ENCODE measurements at regions of chr6 and their contacts with region 1.

Region 1: DNA sequence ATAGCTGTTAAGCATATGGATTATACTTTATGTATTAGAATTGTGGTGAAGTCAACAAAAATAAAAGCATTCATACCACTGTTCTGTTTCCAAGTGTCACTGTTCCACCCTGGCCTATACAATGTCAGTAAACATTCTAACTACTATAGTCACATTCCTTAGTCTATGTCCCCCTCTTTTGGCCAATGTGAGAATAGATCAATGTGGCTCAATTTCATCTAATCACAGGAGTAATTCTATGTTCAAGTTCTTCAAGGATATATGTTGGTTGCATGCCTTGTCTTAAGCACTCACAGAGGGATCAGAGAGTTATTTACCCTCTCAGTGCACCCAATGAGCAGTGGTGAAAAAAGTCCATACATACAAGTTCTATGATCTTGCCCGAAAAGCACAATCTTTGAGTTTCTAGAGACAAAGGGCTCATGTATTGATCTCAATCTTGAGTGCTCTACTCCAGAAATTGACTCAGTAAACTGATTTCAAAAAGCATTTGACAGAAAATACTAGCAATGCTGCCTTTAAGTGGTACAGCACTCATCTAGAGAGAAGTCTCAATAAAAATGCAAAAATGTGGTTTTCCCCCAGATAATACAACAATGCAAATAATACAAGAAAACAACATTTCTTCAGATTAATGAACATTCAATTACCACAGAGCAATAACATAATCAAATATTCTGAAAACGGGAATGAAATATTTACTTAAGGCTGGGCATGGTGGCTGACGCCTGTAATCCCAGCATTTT is 16.5 kb downstream of the SMLR1 start:
- DNase-seq: peak in 1 of 4 donors; percentile 16
- ATAC-seq: peak; percentile 80
- H3K4me3 ChIP-seq: no peak overlapping the region
- H3K27ac ChIP-seq: no peak overlapping the region
- H3K4me1 ChIP-seq: no peaks in the 10 kb centered on the region
- H3K27me3 ChIP-seq: no peaks in the 10 kb centered on the region
- CTCF ChIP-seq: peak; percentile 7 to 82 (median 67)
- POLR2A ChIP-seq: no peak

Region 2: DNA sequence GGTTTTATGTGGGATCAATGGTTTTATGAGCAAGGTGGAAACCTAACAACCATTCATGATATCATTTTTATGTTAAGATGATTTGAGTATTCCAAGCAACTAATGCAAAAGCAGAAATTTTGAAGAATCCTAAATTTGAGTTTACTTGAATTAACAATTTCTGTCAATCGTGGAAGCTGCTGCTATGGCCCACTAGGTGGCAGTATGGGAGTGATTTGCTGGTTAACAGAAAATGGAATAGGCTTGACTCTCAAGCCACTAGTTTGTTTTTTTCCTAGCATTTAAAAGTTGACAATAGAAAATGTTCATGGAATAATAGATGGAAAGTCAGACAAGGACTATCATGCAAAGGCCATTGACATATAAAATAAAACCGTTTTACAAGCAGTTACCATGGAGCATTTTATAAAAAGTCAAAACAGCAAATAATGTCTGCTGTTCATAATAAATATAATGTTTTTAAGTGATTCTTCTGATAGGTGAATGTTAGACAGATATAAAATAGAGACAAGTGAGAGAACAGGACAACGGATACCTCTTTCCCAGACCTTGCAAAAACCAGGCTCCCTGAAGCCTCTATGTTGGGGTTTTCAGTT is 521.0 kb before region 1 on chr6:
- intact Hi-C with region 1: loop called (anchors 10 kb)
- DNase-seq: peak; percentile 38 to 61 (median 54)
- ATAC-seq: peak; percentile 33
- H3K4me3 ChIP-seq: no peak overlapping the region
- H3K27ac ChIP-seq: no peak overlapping the region
- H3K4me1 ChIP-seq: no peaks in the 10 kb centered on the region
- H3K27me3 ChIP-seq: no peaks in the 10 kb centered on the region
- CTCF ChIP-seq: peak; percentile 57 to 90 (median 72)
- POLR2A ChIP-seq: no peak

Measured in body of pancreas (tissue), 4 donors.